ENCODE measurements at regions of chr11 and their contacts with region 1.

Region 1: GRCh38 chr11:75717608-75718418 is at the start of gene MOGAT2:
- DNase-seq: no peak
- ATAC-seq: no peak
- H3K4me3 ChIP-seq: no peak within 1 kb of the TSS
- H3K27ac ChIP-seq: no peak within 1 kb of the TSS
- H3K4me1 ChIP-seq: peaks cover 11% of the 10 kb centered on the region
- H3K27me3 ChIP-seq: no peaks in the 10 kb centered on the region
- CTCF ChIP-seq: no peak
- EP300 ChIP-seq: no peak
- POLR2A ChIP-seq: no peak
- RAD21 ChIP-seq: no peak
- polyA plus RNA-seq, gene MOGAT2: 0.16 to 0.21 TPM

Region 2: DNA sequence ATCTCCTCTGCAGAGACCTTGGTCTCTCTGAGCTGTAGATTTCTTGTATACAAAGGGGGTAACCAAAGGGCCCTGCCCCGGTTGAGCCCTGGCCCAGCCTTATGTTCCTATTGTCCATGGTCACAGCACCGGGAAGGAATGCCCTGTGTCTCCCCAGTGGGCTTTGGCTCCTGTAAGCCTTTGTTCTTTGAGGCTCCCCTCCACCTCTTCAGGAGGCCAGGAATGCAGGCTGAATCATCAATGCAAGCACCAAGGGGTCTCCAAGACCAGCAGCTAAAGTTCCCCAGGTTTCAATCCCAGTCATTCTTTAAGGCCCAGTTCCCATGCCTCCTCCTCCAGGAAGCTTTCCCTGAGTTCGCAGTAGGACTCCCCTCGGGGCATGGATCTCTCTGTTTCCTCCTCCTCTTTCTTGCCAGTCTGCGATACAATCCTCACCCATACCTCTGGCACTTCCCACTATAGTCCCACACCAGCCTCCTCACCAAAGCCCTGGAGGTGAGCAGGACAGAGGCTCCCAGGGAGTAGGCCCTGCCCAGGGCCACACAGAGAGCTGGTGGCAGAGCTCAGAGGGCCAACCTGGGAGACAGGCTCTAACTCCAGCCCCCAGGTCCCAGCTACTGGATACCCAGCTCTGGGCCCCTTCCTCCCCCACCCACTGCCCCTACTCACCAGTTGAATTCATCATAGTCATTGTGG is 255.5 kb before region 1 on chr11:
- CTCF ChIA-PET with region 1: no interaction called
- POLR2A ChIA-PET with region 1: no interaction called
- RAD21 ChIA-PET with region 1: no interaction called
- SMC1A ChIA-PET with region 1: no interaction called
- in situ Hi-C with region 1: no loop called
- intact Hi-C with region 1: no loop called
- DNase-seq: no peak
- ATAC-seq: no peak
- H3K4me3 ChIP-seq: no peak overlapping the region
- H3K27ac ChIP-seq: no peak overlapping the region
- H3K4me1 ChIP-seq: no peaks in the 10 kb centered on the region
- H3K27me3 ChIP-seq: no peaks in the 10 kb centered on the region
- CTCF ChIP-seq: no peak
- EP300 ChIP-seq: no peak
- POLR2A ChIP-seq: no peak
- RAD21 ChIP-seq: no peak

Region 3: GRCh38 chr11:75743711-75744563 is 26.1 kb after region 1 on chr11:
- CTCF ChIA-PET with region 1: no interaction called
- POLR2A ChIA-PET with region 1: no interaction called
- RAD21 ChIA-PET with region 1: no interaction called
- SMC1A ChIA-PET with region 1: no interaction called
- in situ Hi-C with region 1: no loop called
- intact Hi-C with region 1: no loop called
- DNase-seq: no peak
- ATAC-seq: no peak
- H3K4me3 ChIP-seq: no peak overlapping the region
- H3K27ac ChIP-seq: no peak overlapping the region
- H3K4me1 ChIP-seq: no peaks in the 10 kb centered on the region
- H3K27me3 ChIP-seq: no peaks in the 10 kb centered on the region
- CTCF ChIP-seq: no peak
- EP300 ChIP-seq: no peak
- POLR2A ChIP-seq: no peak
- RAD21 ChIP-seq: no peak

Region 4: DNA sequence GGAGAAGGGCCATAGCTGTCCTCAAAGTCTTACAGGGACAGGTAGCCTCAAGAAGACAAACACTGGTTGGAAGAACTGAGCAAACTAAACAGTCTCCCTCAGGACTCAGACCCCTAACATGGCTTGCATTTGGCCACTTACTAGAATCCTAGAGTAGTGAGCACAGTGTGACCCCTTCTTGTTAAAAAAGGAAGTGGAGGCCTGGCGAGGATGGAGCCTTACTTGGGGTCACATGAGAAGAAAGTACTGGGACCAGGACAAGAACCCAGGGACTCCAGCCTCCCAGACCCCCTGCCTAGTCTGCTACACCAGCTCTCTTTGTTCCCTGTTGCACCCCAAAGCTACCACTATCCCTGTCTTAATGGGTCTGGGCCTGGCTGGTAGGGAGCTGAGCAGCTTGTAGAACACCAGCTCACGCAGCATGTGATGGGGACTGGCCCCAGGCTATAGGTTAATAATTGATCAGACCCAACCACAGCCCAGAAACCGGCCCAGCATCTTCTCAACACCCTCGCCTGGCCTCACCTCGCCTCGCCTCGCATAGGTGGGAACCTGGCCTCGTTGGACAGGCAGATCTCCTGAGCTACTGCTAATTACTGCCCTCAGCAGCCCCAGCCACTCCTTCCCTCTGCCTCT is 68.4 kb after region 1 on chr11:
- CTCF ChIA-PET with region 1: interaction called, 13 read pairs
- POLR2A ChIA-PET with region 1: no interaction called
- RAD21 ChIA-PET with region 1: interaction called, 16 read pairs
- SMC1A ChIA-PET with region 1: interaction called, 12 read pairs
- in situ Hi-C with region 1: no loop called
- intact Hi-C with region 1: no loop called
- DNase-seq: no peak
- ATAC-seq: peak; percentile 96
- H3K4me3 ChIP-seq: no peak overlapping the region
- H3K27ac ChIP-seq: no peak overlapping the region
- H3K4me1 ChIP-seq: no peaks in the 10 kb centered on the region
- H3K27me3 ChIP-seq: no peaks in the 10 kb centered on the region
- CTCF ChIP-seq: no peak
- EP300 ChIP-seq: no peak
- POLR2A ChIP-seq: no peak
- RAD21 ChIP-seq: no peak

Region 5: GRCh38 chr11:76190376-76190775 is 472.6 kb after region 1 on chr11:
- CTCF ChIA-PET with region 1: no interaction called
- POLR2A ChIA-PET with region 1: no interaction called
- RAD21 ChIA-PET with region 1: no interaction called
- SMC1A ChIA-PET with region 1: no interaction called
- in situ Hi-C with region 1: no loop called
- intact Hi-C with region 1: no loop called
- DNase-seq: no peak
- ATAC-seq: no peak
- H3K4me3 ChIP-seq: no peak overlapping the region
- H3K27ac ChIP-seq: no peak overlapping the region
- H3K4me1 ChIP-seq: no peaks in the 10 kb centered on the region
- H3K27me3 ChIP-seq: no peaks in the 10 kb centered on the region; a peak in 2 of 4 replicates
- CTCF ChIP-seq: no peak
- EP300 ChIP-seq: no peak
- POLR2A ChIP-seq: no peak
- RAD21 ChIP-seq: no peak

Region 6: DNA sequence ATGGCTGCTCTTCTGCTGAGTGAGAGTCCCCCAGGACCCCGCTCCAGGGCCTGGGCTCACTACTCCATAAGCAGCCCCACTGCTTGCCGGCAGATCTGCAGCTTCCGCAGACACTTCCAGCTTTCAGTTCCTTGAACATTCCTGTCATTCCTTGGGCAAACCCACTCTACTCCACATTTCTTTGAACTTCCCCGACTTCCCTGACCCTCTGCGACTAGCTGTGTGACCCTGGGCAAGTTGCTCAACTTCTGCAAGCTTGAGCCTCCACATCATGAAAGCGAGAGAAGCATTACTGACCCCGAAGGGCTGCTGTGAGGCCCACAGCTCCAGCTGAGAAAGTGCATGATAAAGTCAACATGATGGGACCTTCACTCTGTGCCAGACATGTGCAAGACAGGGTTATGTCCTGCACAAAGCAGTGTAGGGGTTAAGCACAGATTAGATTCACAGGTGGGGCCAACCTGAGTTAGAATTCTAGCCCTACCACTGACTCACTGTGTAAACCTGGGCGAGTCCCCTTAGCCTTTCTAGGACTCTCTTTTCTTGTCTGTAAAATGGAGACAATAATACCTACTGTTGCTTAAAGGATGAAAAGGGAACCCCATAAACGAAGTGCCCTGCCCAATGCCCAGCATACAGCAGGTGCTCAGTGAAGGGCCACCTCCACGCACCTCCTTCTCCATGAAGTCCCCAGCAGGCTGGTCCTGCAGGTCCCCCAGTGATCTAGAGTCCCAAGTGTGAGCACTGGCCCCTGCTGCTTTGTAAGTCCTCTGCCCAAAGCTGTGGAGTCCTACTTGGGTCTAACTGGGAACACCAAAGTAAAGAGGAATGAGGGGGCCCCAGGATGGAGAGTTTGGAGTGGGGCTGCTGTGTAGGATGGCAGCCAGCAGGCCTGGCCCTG is 611.5 kb after region 1 on chr11:
- CTCF ChIA-PET with region 1: no interaction called
- POLR2A ChIA-PET with region 1: no interaction called
- RAD21 ChIA-PET with region 1: no interaction called
- SMC1A ChIA-PET with region 1: no interaction called
- in situ Hi-C with region 1: no loop called
- intact Hi-C with region 1: loop called (anchors 10 kb)
- DNase-seq: no peak
- ATAC-seq: no peak
- H3K4me3 ChIP-seq: no peak overlapping the region
- H3K27ac ChIP-seq: no peak overlapping the region
- H3K4me1 ChIP-seq: no peaks in the 10 kb centered on the region
- H3K27me3 ChIP-seq: no peaks in the 10 kb centered on the region; a peak in 3 of 4 replicates
- CTCF ChIP-seq: no peak
- EP300 ChIP-seq: no peak
- POLR2A ChIP-seq: no peak
- RAD21 ChIP-seq: no peak